H1 (cell line): ENCODE measurements at regions of chr3 and their contacts with region 1.

Region 1: DNA sequence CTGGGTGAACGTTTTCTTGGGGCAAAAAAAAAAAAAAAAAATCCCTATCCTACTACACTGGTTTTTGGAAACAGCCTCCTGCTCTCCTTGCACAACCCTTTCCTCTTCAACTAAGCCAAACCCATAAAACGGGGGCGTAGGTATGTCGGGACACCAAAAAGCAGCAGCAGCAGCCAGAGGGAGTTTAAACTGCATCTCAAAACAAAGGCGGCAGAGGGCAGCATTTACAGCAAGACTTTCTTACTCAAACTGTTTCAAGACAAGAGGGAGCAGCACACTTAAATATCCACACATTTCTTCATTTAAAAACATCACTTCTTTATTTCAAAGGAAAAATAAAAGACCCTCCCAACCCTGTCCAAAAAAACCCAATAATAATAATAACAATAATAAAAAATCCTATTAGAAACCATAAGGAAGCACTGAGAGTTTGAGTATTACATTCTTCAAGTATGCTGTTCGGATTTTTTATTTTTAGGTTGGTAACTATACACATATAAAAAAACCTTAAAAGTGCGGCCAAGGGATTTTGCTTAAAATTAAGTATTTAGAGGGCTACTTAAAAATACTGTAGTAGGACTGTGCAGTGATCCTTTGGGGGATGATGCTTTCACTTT is 43.9 kb upstream of the PLXND1 start:
- DNase-seq: peak in 1 of 2 experiments; percentile 84
- H3K4me3 ChIP-seq: no peak overlapping the region
- H3K27ac ChIP-seq: no peak overlapping the region
- H3K4me1 ChIP-seq: peaks cover 0 to 4% (median 2%) of the 10 kb centered on the region in 4 experiments; a peak in 3 of 7 replicates
- H3K27me3 ChIP-seq: no peaks in the 10 kb centered on the region
- CTCF ChIP-seq: peak; percentile 39 to 91 (median 75)
- EP300 ChIP-seq: no peak
- POLR2A ChIP-seq: no peak
- RAD21 ChIP-seq: peak; percentile 89 to 94

Region 2: DNA sequence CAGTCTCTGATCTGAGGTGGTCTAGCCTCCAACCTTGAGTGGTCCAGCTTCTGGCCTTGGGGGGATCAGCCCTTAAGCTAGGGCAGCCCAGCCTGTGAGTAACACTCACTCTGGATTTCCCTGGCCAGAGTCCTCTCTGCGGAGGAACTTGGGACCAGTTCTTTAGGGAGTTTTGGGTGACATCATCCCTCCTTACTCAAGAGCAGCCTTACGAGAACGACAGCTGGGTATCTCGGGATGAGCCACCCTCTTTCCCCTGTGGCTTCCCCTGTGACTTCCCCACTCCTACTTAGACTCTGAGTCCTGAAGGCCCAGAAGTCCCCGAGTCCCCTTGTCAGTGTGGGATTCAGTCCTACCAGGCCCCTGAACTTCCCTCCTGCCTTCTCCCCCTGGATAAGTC is 33.7 kb before region 1 on chr3:
- CTCF ChIA-PET with region 1: no interaction called
- POLR2A ChIA-PET with region 1: no interaction called
- DNase-seq: no peak
- H3K4me3 ChIP-seq: no peak overlapping the region
- H3K27ac ChIP-seq: no peak overlapping the region
- H3K4me1 ChIP-seq: peaks cover 0 to 18% (median 5%) of the 10 kb centered on the region in 4 experiments; a peak in 5 of 7 replicates
- H3K27me3 ChIP-seq: no peaks in the 10 kb centered on the region
- CTCF ChIP-seq: no peak
- EP300 ChIP-seq: no peak
- POLR2A ChIP-seq: no peak
- RAD21 ChIP-seq: no peak

Region 3: DNA sequence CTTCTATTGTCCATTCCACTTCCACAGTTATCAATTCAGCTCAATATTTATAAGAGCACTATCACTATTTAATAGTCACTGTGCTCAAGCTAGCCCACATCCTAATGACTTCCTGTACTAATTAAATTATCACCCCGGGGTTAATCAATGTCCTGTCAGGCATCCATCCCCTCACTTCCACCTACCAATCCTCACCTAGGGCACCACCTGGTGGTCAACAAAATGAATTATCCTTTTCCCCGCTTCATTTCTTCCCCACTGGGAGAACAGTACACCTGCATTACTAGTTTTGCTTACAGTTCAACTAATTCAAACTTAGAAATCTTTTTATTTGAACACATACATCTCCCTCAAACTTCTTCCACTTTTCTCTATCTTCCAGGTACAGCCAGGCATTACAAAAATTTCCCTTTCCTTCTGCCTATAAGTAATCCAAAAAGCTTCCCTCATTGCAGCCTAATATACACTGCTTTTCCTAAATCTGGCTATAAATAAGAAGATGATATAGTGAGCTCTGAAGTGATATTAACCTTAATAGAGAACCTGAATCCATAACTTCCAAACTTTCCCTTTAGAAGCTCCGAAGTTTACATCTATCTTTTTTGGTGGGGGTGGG is 174.7 kb after region 1 on chr3:
- CTCF ChIA-PET with region 1: interaction called, 89 read pairs
- POLR2A ChIA-PET with region 1: no interaction called
- DNase-seq: peak in 1 of 2 experiments; percentile 61
- H3K4me3 ChIP-seq: no peak overlapping the region
- H3K27ac ChIP-seq: no peak overlapping the region
- H3K4me1 ChIP-seq: no peaks in the 10 kb centered on the region
- H3K27me3 ChIP-seq: no peaks in the 10 kb centered on the region
- CTCF ChIP-seq: peak; percentile 46 to 74 (median 73)
- EP300 ChIP-seq: no peak
- POLR2A ChIP-seq: no peak
- RAD21 ChIP-seq: peak; percentile 89 to 91

Region 4: DNA sequence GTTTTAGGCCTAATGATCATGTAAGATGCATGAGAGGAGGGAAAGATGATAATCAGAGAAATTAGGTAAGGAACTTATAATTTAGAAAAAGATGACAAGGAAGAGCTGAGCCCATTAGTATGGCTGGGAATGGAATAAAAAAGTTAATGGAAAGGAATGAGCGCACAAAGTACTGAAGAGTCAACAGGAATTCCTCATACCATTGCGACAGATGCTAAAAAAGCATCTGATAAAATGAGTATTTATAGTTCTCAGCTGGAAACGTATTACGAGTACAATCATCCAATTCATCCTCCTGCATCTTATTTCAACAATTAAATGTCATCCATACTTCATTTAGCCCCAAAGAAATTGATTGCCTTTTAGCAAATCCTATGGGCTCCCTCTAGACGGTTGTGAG is 184.2 kb after region 1 on chr3:
- CTCF ChIA-PET with region 1: interaction called, 89 read pairs
- POLR2A ChIA-PET with region 1: no interaction called
- DNase-seq: no peak
- H3K4me3 ChIP-seq: no peak overlapping the region
- H3K27ac ChIP-seq: no peak overlapping the region
- H3K4me1 ChIP-seq: peaks cover 0 to 10% (median 6%) of the 10 kb centered on the region in 4 experiments; a peak in 4 of 7 replicates
- H3K27me3 ChIP-seq: no peaks in the 10 kb centered on the region
- CTCF ChIP-seq: no peak
- EP300 ChIP-seq: no peak
- POLR2A ChIP-seq: no peak
- RAD21 ChIP-seq: no peak